Right ventricle myocardium inferior (tissue), 1 donor: ENCODE measurements at regions of chr1 and their contacts with region 1.

Region 1: GRCh38 chr1:33633019-33633801 is 160.8 kb downstream of the ZSCAN20 start:
- DNase-seq: peak; percentile 90
- ATAC-seq: peak; percentile 89

Region 2: GRCh38 chr1:33709783-33710718 is 76.8 kb after region 1 on chr1:
- intact Hi-C with region 1: no loop called
- DNase-seq: no peak
- ATAC-seq: no peak

Region 3: GRCh38 chr1:34162852-34163766 is 529.9 kb after region 1 on chr1:
- intact Hi-C with region 1: loop called (anchors 10 kb)
- DNase-seq: no peak
- ATAC-seq: peak; percentile 89

Region 4: DNA sequence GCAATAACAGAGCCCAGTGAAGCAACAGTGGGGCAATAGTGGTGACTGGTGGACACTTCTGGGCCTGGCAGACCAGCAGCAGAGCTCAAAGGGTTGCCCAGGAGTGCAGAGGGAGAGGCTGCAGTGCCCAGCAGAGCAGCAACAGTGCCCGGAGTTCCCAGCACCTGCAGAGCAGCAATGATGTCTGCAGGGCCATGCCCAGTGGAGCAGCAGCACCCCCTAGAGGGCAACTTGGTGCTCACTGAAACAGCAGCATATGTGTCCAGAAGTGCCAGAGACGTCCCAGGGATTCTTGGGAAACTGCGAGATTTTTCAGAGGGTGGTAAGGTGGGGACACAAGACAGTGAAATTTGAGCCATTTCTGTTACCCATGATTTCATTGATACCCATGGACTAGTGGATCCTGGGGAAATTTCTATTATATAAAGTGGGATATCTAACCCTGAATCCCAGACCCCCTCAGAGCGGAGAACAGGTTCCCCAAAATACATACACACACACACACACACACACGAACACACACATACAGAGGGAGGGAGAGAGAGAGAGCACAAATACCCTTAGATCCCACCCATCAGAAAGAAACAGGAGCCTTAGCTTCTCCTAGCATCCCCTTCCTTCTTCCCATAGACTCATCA is 964.8 kb after region 1 on chr1:
- intact Hi-C with region 1: loop called (anchors 5 kb)
- DNase-seq: no peak
- ATAC-seq: peak; percentile 44

Region 5: GRCh38 chr1:34742667-34743270 is 1109.6 kb after region 1 on chr1:
- intact Hi-C with region 1: loop called (anchors 5 kb)
- DNase-seq: peak; percentile 81
- ATAC-seq: peak; percentile 83